ENCODE measurements at regions of chr2 and their contacts with region 1.

Region 1: GRCh38 chr2:202588647-202589581 is 45.9 kb upstream of the FAM117B start:
- H3K4me3 Mint-ChIP-seq: peak overlapping the region; percentile 39
- H3K27ac Mint-ChIP-seq: peak overlapping the region; percentile 66
- H3K4me1 Mint-ChIP-seq: peaks cover 20% of the 10 kb centered on the region
- H3K27me3 Mint-ChIP-seq: no peaks in the 10 kb centered on the region

Region 2: DNA sequence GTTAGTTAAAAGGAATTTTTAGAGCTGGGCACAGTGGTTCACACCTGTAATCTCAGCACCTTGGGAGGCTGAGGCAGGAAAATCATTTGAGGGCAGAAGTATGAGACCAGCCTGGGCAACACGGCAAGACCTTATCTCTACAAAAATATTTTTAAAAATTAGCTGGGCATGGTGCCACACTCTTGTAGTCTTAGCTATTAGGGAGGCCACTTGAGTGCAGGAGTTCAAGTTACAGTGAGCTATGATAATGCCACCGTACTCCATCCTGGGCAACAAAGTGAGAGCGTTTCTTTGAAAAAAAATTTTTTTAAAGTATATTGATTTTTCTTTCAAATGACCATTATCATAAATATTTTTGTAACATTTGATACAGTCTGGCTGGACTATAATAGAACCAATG is 47.8 kb before region 1 on chr2:
- intact Hi-C with region 1: no loop called
- H3K4me3 Mint-ChIP-seq: no peak overlapping the region
- H3K27ac Mint-ChIP-seq: no peak overlapping the region
- H3K4me1 Mint-ChIP-seq: peaks cover 20% of the 10 kb centered on the region
- H3K27me3 Mint-ChIP-seq: no peaks in the 10 kb centered on the region

Region 3: DNA sequence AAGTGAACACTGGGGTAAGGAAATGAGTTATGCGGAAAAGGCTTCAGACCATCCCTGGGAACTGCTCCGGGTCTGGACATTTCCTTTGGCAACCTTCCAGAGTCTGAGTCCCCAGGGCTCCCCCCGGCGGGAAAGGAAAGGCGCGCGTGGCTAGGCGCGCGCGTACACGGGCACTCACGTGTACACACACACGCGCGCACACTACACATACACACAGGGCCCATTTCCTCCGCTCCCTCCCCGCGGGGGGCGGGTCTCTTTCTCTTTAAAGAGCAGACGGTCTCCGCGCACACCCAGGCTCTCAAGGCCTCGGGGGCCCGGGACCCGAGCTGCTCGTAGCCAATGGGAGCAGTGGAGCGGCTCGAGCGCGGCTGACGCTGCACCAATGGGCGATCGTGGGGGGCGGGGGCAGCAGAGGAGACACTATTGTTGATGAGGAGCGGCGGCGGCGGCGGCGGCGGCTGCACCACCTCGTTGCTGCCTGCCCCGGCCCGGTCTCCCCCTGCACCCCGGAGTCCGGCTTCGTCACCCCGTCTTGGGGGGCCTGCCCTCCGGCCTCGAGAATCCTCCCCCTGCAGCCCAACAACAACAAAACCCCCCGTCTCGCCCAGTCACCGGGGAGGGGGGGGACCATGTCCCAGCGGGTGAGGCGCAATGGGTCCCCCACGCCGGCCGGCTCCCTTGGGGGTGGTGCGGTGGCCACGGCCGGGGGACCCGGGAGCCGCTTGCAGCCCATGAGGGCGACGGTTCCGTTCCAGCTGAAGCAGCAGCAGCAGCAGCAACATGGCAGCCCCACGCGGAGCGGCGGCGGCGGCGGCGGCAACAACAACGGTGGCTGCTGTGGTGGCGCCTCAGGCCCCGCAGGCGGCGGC is 45.9 kb after region 1 on chr2 and contains the start of gene FAM117B:
- intact Hi-C with region 1: loop called (anchors 1 kb)
- H3K4me3 Mint-ChIP-seq: peak within 1 kb of the TSS; percentile 92
- H3K27ac Mint-ChIP-seq: peak within 1 kb of the TSS; percentile 94
- H3K4me1 Mint-ChIP-seq: peaks cover 29% of the 10 kb centered on the region
- H3K27me3 Mint-ChIP-seq: no peaks in the 10 kb centered on the region

Measured in dendritic cell treated with granulocyte-macrophage colony-stimulating factor and Interleukin-4, amounts not matched to agents 40 ng/mL and 50 ng/mL, for 4 days (primary cell).